ENCODE measurements at regions of chr7 and their contacts with region 1.

Region 1: GRCh38 chr7:78134256-78134655 is 335.7 kb downstream of the PHTF2 start:
- DNase-seq: peak; percentile 51
- H3K4me3 ChIP-seq: no peak overlapping the region
- H3K27me3 ChIP-seq: no peaks in the 10 kb centered on the region
- CTCF ChIP-seq: peak; percentile 61

Region 2: DNA sequence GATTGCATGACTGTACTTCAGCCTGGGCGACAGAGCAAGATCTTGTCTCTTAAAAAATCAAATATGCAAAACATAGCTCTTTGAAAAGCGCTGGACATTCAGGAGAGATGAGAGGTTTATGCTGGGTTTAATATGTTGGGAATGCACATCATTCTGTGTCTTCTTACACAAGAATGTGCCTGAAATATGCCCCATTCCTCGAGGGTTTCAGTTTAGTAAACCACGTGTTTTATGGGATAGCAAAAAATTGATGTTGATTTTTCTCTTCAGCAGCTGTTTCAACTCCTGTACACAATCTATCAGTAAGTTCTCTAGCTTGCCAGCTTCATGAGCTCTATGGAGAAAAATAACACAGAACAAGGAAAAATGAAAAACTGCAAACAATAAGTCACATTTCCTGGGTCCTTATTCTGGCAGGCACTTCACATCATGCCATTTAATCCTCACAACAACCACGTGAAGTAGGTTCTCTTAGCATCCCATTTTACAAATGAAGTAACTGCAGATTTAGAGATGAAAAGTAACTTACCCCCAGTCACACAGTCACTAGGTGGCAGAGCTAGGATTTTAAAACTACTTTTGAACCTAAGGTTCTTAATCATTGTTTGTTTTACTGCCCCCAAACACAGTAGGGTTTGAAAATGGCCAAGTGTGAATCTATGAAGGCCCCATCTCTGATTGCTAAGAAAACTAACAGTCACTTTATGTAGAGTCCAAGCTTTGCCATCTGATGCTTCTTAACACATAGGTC is 87.9 kb after region 1 on chr7:
- CTCF ChIA-PET with region 1: interaction called, 19 read pairs
- POLR2A ChIA-PET with region 1: no interaction called
- DNase-seq: peak; percentile 69
- H3K4me3 ChIP-seq: no peak overlapping the region
- H3K27me3 ChIP-seq: no peaks in the 10 kb centered on the region
- CTCF ChIP-seq: peak; percentile 18; the same call in 1 of the 2 replicates

Region 3: GRCh38 chr7:78510580-78511188 is 376.4 kb after region 1 on chr7:
- CTCF ChIA-PET with region 1: interaction called, 14 read pairs
- POLR2A ChIA-PET with region 1: no interaction called
- DNase-seq: no peak
- H3K4me3 ChIP-seq: no peak overlapping the region
- H3K27me3 ChIP-seq: no peaks in the 10 kb centered on the region; the same call in 1 of the 2 replicates
- CTCF ChIP-seq: peak; percentile 89

Measured in BJ (cell line).